ENCODE measurements at regions of chr2 and their contacts with region 1.

Region 1: DNA sequence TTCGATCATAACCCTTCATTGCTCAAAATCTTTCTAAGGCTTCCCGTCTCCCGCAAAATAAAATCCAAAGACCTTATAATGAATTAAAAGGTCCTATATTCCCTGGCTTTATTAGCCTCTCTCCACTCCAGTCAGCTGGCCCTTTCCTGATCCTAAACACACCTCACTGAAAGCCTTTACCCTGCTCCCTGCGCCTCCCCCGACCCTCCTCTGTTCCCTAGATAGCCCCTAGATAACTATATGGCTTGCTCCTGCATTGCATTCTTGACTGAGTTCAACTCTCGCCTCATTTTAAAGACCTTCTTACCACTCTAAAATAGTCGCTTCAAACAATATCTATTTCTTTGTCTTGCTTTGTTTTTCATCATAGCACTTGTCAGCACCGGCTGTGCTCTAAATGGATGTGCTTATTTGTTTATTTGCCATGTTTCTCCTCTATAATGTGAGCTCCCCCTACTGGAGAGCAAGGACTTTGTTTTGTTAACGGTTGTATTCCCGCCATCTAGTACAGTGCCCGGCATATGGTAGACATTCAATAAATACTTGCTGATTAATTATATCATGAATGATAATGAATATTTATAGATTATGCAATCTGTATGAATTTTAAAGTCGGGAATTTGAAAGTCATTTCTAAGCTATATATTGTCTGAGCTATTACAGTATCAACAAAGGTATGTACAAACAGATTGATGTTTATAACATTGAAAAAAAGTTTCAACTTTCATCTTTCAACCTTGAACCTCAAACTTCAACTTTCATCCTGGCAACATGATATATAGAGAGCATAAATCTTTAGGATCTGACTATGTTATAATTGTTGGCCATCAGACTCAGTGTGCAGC is 32.4 kb upstream of the VIT start:
- DNase-seq: peak in 1 of 2 donors; percentile 21
- ATAC-seq: peak in 7 of 8 donors; percentile 73 to 94 (median 87)
- H3K4me3 ChIP-seq: no peak overlapping the region
- H3K27ac ChIP-seq: no peak overlapping the region
- H3K4me1 ChIP-seq: peaks cover 0 to 8% (median 4%) of the 10 kb centered on the region in 9 donors
- H3K27me3 ChIP-seq: peaks cover 0 to 34% (median 5%) of the 10 kb centered on the region in 7 donors
- CTCF ChIP-seq: peak; percentile 69 to 88 (median 79)

Region 2: GRCh38 chr2:35973132-35973736 is 690.8 kb before region 1 on chr2:
- intact Hi-C with region 1: loop called in 1 of 10 experiments (anchors 10 kb)
- DNase-seq: no peak
- ATAC-seq: peak in 6 of 8 donors; percentile 67 to 91 (median 79)
- H3K4me3 ChIP-seq: no peak overlapping the region
- H3K27ac ChIP-seq: peak overlapping the region; percentile 34 to 75 (median 60)
- H3K4me1 ChIP-seq: no peaks in the 10 kb centered on the region
- H3K27me3 ChIP-seq: no peaks in the 10 kb centered on the region
- CTCF ChIP-seq: peak in 8 of 9 donors; percentile 15 to 61 (median 46)

Region 3: GRCh38 chr2:36348721-36349120 is 315.4 kb before region 1 on chr2:
- intact Hi-C with region 1: loop called (anchors 1 to 5 kb)
- DNase-seq: no peak
- ATAC-seq: no peak
- H3K4me3 ChIP-seq: no peak overlapping the region
- H3K27ac ChIP-seq: no peak overlapping the region
- H3K4me1 ChIP-seq: peaks cover 0 to 16% (median 13%) of the 10 kb centered on the region in 9 donors
- H3K27me3 ChIP-seq: peaks cover 0 to 6% (median 0%) of the 10 kb centered on the region in 7 donors
- CTCF ChIP-seq: no peak

Region 4: GRCh38 chr2:36507408-36507812 is 156.7 kb before region 1 on chr2:
- intact Hi-C with region 1: loop called in 4 of 10 experiments (anchors 10 kb)
- DNase-seq: peak in 1 of 2 donors; percentile 58
- ATAC-seq: peak; percentile 85 to 96 (median 94)
- H3K4me3 ChIP-seq: no peak overlapping the region
- H3K27ac ChIP-seq: no peak overlapping the region
- H3K4me1 ChIP-seq: no peaks in the 10 kb centered on the region
- H3K27me3 ChIP-seq: no peaks in the 10 kb centered on the region
- CTCF ChIP-seq: peak; percentile 54 to 92 (median 83)

Region 5: GRCh38 chr2:36530178-36530982 is 133.7 kb before region 1 on chr2:
- intact Hi-C with region 1: loop called in 2 of 10 experiments (anchors 10 kb)
- DNase-seq: no peak
- ATAC-seq: peak in 4 of 8 donors; percentile 8 to 24 (median 18)
- H3K4me3 ChIP-seq: no peak overlapping the region
- H3K27ac ChIP-seq: peak overlapping the region in 6 of 10 donors; percentile 46 to 62 (median 56)
- H3K4me1 ChIP-seq: peaks cover 4 to 41% (median 20%) of the 10 kb centered on the region in 9 donors
- H3K27me3 ChIP-seq: no peaks in the 10 kb centered on the region
- CTCF ChIP-seq: no peak

Region 6: DNA sequence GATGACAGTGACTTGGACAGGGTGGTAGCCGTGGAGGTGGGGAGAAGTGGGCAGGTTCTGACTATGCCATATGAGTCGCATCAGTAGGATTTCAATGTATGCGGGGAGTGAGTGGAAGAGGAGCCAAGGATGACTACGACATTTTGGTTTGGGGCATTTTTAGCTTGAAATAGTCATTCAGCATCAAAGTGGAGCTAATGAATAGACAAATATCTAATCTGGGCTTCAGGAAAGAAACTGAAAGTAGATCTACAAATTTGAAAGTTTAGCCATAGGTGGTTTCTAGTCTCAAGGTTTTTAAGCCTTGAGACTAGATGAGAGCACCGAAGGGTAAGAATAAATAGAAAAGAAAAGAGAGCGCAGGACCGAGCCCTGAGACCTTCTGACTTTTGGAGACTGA is 124.4 kb before region 1 on chr2:
- intact Hi-C with region 1: loop called in 4 of 10 experiments (anchors 5 to 10 kb)
- DNase-seq: no peak
- ATAC-seq: no peak
- H3K4me3 ChIP-seq: no peak overlapping the region
- H3K27ac ChIP-seq: no peak overlapping the region
- H3K4me1 ChIP-seq: peaks cover 0 to 36% (median 19%) of the 10 kb centered on the region in 9 donors
- H3K27me3 ChIP-seq: no peaks in the 10 kb centered on the region
- CTCF ChIP-seq: no peak